ENCODE measurements at regions of chr10 and their contacts with region 1.

Region 1: DNA sequence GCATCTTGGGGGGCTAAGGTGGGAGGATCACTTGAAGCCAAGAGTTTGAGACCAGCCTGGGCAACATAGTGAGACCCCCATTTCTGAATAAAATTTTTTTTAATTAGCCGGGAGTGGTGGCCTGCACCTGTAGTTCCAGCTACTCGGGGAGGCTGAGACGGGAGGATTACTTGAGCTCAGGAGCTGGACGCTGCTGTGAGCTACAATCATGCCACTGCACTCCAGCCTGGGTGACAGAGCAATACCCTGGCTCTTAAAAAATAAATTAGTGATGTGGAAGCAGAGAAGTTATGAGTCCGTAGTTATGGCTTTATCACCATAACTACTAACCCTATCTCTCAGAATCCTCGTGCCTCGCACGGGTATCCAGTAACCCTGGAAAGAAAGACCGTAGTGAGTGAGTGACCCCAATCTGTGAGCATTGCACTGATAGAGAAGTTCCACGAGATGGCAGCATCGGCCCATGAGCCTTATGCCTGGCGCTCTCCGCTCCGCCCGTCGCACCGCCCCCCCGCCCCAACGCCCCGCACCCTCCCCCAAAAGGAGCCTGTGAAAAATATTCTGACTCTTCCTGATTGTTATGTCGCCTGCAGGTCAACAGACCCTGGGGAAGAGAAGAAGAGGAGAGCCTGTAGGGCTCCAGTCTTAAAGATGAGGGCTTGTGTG is 4.9 kb upstream of the SLC29A3 start:
- DNase-seq: peak in 1 of 2 experiments; percentile 69
- H3K4me3 ChIP-seq: no peak overlapping the region
- H3K4me3 Mint-ChIP-seq: no peak overlapping the region
- H3K27ac Mint-ChIP-seq: no peak overlapping the region
- H3K4me1 ChIP-seq: 0 out of 2 replicates have a peak, but pooled peaks cover 5% of the 10 kb centered on the region
- H3K4me1 Mint-ChIP-seq: no peaks in the 10 kb centered on the region
- H3K27me3 ChIP-seq: no peaks in the 10 kb centered on the region
- H3K27me3 Mint-ChIP-seq: peaks cover 12% of the 10 kb centered on the region
- CTCF ChIP-seq: peak; percentile 96 to 99

Region 2: DNA sequence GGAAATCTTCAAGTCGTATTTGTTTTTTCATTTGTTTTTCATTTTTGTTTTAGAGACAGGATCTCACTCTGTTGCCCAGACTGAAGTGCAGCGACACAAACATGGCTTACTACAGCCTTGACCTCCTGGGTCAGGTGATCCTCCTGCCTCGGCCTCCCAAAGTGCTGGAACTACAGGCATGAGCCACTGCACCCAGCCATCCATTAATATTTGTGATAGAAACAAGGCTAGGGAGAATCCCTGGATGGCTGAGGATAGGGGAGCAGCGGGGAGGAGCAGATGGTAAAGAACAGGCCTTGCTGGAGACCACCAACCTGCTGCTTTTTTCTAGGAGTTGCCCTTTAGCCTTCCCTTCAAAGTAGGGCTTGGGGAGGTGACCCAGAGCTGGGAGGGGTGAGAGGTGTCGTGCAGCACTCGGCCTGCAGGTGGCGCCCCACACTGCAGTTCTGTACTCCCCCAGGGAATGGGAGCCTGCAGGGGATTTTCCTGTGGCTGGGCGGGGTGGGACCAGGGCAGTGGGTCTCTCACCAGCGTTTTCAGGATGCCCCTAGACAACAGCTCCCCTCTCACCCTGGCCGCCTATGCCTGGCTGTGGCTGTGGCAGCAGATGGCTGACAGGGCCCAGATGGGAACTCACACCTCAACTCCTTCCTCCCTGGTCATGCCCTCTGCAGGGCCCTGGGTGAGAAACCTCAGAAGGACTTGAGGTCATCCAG is 70.0 kb after region 1 on chr10:
- CTCF ChIA-PET with region 1: interaction called, 50 read pairs
- POLR2A ChIA-PET with region 1: no interaction called
- intact Hi-C with region 1: loop called (anchors 2 kb)
- DNase-seq: peak; percentile 80 to 89
- H3K4me3 ChIP-seq: no peak overlapping the region
- H3K4me3 Mint-ChIP-seq: no peak overlapping the region
- H3K27ac Mint-ChIP-seq: no peak overlapping the region
- H3K4me1 ChIP-seq: no peaks in the 10 kb centered on the region
- H3K4me1 Mint-ChIP-seq: no peaks in the 10 kb centered on the region
- H3K27me3 ChIP-seq: no peaks in the 10 kb centered on the region
- H3K27me3 Mint-ChIP-seq: peaks cover 6% of the 10 kb centered on the region
- CTCF ChIP-seq: peak; percentile 97 to 98

Region 3: GRCh38 chr10:71569775-71570588 is 255.8 kb after region 1 on chr10:
- CTCF ChIA-PET with region 1: interaction called, 18 read pairs
- POLR2A ChIA-PET with region 1: no interaction called
- intact Hi-C with region 1: loop called (anchors 1 kb)
- DNase-seq: peak; percentile 79 to 88
- H3K4me3 ChIP-seq: no peak overlapping the region
- H3K4me3 Mint-ChIP-seq: no peak overlapping the region
- H3K27ac Mint-ChIP-seq: no peak overlapping the region
- H3K4me1 ChIP-seq: no peaks in the 10 kb centered on the region
- H3K4me1 Mint-ChIP-seq: no peaks in the 10 kb centered on the region
- H3K27me3 ChIP-seq: no peaks in the 10 kb centered on the region
- H3K27me3 Mint-ChIP-seq: peaks cover 5% of the 10 kb centered on the region
- CTCF ChIP-seq: peak; percentile 94 to 95

Region 4: GRCh38 chr10:71608819-71609768 is 294.9 kb after region 1 on chr10:
- CTCF ChIA-PET with region 1: interaction called, 3 read pairs
- POLR2A ChIA-PET with region 1: no interaction called
- intact Hi-C with region 1: loop called (anchors 2 kb)
- DNase-seq: peak; percentile 83 to 86
- H3K4me3 ChIP-seq: no peak overlapping the region
- H3K4me3 Mint-ChIP-seq: no peak overlapping the region
- H3K27ac Mint-ChIP-seq: no peak overlapping the region
- H3K4me1 ChIP-seq: peaks cover 14% of the 10 kb centered on the region; the same call in 1 of the 2 replicates
- H3K4me1 Mint-ChIP-seq: no peaks in the 10 kb centered on the region
- H3K27me3 ChIP-seq: no peaks in the 10 kb centered on the region
- H3K27me3 Mint-ChIP-seq: no peaks in the 10 kb centered on the region
- CTCF ChIP-seq: peak; percentile 90 to 97

Region 5: DNA sequence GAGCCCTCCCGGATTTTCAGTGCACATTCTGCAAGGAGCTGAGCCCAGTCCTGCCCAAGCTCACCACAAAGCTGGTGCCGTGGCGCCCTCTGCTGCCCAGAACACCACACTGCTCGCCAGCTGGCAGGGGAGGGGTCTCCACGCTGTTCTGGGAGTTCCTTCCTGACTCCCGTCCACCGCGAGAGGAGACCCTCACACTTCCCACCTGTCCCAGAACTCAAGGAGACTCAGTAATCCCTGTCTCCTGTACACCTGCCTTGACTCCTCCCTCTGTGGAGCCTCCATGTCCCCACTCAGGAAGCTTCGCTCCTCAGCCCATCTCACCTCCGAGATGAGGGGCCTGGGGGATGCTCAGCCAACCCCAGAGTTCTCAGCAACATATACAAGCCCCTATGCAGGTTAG is 394.1 kb after region 1 on chr10:
- CTCF ChIA-PET with region 1: interaction called, 20 read pairs
- POLR2A ChIA-PET with region 1: no interaction called
- intact Hi-C with region 1: loop called (anchors 1 kb)
- DNase-seq: peak; percentile 76 to 88
- H3K4me3 ChIP-seq: no peak overlapping the region
- H3K4me3 Mint-ChIP-seq: no peak overlapping the region
- H3K27ac Mint-ChIP-seq: peak overlapping the region; percentile 2
- H3K4me1 ChIP-seq: 0 out of 2 replicates have a peak, but pooled peaks cover under 1% of the 10 kb centered on the region
- H3K4me1 Mint-ChIP-seq: no peaks in the 10 kb centered on the region
- H3K27me3 ChIP-seq: no peaks in the 10 kb centered on the region
- H3K27me3 Mint-ChIP-seq: no peaks in the 10 kb centered on the region
- CTCF ChIP-seq: peak; percentile 97 to 98

Region 6: DNA sequence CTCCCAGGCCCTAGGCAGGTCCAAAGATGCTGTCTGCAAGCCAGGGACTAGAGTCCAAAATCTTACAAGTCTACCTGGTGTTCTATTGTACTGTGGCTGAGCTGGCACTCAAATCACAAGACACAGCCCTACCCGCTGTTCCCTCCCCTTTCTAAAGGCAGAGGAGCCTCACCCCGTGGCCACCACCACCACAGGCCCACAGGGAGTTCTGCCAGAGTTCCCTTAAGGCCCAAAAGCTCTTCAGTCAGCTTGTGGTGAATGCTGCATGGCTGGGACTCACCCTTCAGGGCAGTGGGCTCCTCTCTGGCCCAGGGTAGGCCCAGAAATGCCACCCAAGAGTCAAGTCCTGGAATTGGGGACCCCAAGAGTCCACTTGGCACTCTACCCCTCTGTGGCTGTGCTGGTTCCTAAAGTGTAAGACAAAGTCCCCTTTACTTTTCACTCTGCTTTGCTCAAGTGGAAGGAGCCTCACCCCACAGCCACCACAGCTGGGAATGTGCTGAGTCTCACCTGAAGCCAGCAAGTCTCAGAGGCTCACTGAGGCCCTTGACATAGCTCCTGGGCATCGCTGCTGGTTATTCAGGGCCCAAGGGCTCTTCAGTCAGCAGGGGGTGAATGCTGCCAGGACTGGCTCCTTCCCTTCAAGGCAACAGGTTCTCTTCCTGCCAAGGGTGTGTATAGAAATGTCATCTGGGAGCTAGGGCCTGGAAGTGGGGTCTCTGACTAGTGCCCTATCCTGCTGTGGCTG is 585.7 kb after region 1 on chr10:
- CTCF ChIA-PET with region 1: no interaction called
- POLR2A ChIA-PET with region 1: no interaction called
- intact Hi-C with region 1: loop called (anchors 5 kb)
- DNase-seq: no peak
- H3K4me3 ChIP-seq: no peak overlapping the region
- H3K4me3 Mint-ChIP-seq: no peak overlapping the region
- H3K27ac Mint-ChIP-seq: no peak overlapping the region
- H3K4me1 ChIP-seq: no peaks in the 10 kb centered on the region; the same call in 1 of the 2 replicates
- H3K4me1 Mint-ChIP-seq: peaks cover 6% of the 10 kb centered on the region
- H3K27me3 ChIP-seq: no peaks in the 10 kb centered on the region
- H3K27me3 Mint-ChIP-seq: no peaks in the 10 kb centered on the region
- CTCF ChIP-seq: no peak

Measured in Caco-2 (cell line).